Calu3 (cell line): ENCODE measurements at regions of chr5 and their contacts with region 1.

Region 1: DNA sequence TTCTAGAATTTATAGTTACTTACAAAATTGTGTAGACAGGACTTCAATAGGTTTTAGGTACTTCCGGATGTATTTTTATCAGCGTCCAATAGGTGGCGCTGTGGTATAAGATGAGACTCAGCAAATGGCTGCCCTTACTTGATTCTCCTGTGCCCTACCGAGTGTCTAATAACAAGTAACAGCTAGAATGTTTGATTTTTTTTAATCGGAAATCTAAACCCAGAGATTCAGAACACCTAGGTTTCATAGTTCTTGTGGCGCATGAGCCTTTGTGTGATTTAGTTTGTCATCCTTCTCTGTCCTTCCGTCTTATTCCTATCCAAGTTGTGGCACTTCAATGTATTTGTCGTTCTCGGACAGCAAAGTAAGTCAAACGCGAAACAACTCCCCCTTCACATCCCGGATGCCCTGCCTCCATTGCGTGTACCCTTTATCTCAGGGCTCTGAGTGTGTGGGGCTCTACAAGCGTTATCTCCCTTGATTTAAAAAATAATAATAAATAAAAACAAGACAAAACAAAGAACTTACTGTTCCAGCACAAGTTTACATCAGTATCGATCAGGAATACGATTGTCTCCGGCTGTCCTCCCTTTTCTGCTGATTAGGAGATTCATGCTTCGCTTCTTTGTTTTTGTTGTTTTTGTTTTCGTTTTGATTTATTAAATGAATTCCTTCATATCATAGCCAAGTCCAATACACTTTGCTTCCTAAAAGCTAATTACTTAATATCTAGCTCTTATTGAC is 50.7 kb upstream of the SLC30A5 start:
- DNase-seq: peak; percentile 83
- H3K4me3 Mint-ChIP-seq: peak overlapping the region; percentile 77
- H3K27ac Mint-ChIP-seq: peak overlapping the region; percentile 43
- H3K4me1 Mint-ChIP-seq: peaks cover 21% of the 10 kb centered on the region
- H3K27me3 Mint-ChIP-seq: no peaks in the 10 kb centered on the region
- CTCF ChIP-seq: peak; percentile 72

Region 2: GRCh38 chr5:68460147-68460798 is 582.8 kb before region 1 on chr5:
- CTCF ChIA-PET with region 1: no interaction called
- intact Hi-C with region 1: no loop called
- DNase-seq: peak; percentile 52
- H3K4me3 Mint-ChIP-seq: no peak overlapping the region
- H3K27ac Mint-ChIP-seq: no peak overlapping the region
- H3K4me1 Mint-ChIP-seq: peaks cover 49% of the 10 kb centered on the region
- H3K27me3 Mint-ChIP-seq: no peaks in the 10 kb centered on the region
- CTCF ChIP-seq: peak; percentile 24

Region 3: GRCh38 chr5:68848091-68848490 is 195.0 kb before region 1 on chr5:
- CTCF ChIA-PET with region 1: no interaction called
- intact Hi-C with region 1: no loop called
- DNase-seq: no peak
- H3K4me3 Mint-ChIP-seq: no peak overlapping the region
- H3K27ac Mint-ChIP-seq: no peak overlapping the region
- H3K4me1 Mint-ChIP-seq: no peaks in the 10 kb centered on the region
- H3K27me3 Mint-ChIP-seq: peaks cover 33% of the 10 kb centered on the region
- CTCF ChIP-seq: no peak

Region 4: GRCh38 chr5:69083412-69083811 is 40.3 kb after region 1 on chr5:
- CTCF ChIA-PET with region 1: interaction called, 11 read pairs
- intact Hi-C with region 1: loop called (anchors 1 kb)
- DNase-seq: peak; percentile 41
- H3K4me3 Mint-ChIP-seq: no peak overlapping the region
- H3K27ac Mint-ChIP-seq: no peak overlapping the region
- H3K4me1 Mint-ChIP-seq: peaks cover 19% of the 10 kb centered on the region
- H3K27me3 Mint-ChIP-seq: no peaks in the 10 kb centered on the region
- CTCF ChIP-seq: no peak